ENCODE measurements at regions of chr7 and their contacts with region 1.

Region 1: DNA sequence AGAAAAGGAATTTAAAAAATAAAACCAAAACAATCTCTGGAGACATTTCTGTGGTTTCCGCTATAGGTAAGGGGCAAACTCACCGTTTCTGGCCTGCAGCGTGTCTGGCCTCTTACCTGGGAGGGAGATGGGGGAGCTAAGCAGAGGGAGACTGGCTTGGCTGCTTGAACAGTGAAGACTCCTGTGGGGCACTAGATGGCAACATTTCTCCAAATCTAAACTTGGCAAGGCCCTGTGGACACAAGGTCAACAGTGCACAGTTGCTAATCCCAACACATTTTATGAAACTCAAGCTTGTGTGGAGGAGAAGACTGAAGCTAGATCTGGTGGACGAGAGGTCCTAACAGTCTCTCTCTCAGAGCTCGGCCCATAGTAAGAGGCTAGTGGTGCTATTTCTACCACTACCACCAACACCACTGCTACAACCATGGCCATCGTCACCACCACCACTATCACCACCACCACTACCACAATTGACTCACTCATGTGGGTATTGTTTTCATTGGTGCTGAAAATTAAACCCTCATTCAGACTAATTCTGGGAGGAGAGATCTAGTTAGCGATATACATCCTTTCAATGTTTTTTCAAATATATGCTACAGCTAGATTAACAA is 28.4 kb upstream of the CDHR3 start:
- DNase-seq: peak in 1 of 3 donors; percentile 66
- ATAC-seq: peak; percentile 94 to 98 (median 96)
- H3K4me3 ChIP-seq: no peak overlapping the region
- H3K27ac ChIP-seq: peak overlapping the region in 2 of 3 donors; percentile 0 to 64
- H3K4me1 ChIP-seq: peaks cover 0 to 12% (median 0%) of the 10 kb centered on the region in 4 donors
- H3K27me3 ChIP-seq: no peaks in the 10 kb centered on the region
- CTCF ChIP-seq: peak; percentile 50 to 66 (median 60)
- POLR2A ChIP-seq: no peak

Region 2: GRCh38 chr7:105990726-105991453 is 56.2 kb after region 1 on chr7:
- intact Hi-C with region 1: no loop called
- DNase-seq: no peak
- ATAC-seq: no peak
- H3K4me3 ChIP-seq: no peak overlapping the region
- H3K27ac ChIP-seq: no peak overlapping the region
- H3K4me1 ChIP-seq: no peaks in the 10 kb centered on the region
- H3K27me3 ChIP-seq: no peaks in the 10 kb centered on the region
- CTCF ChIP-seq: no peak
- POLR2A ChIP-seq: no peak

Region 3: GRCh38 chr7:106009403-106010226 is 74.9 kb after region 1 on chr7:
- intact Hi-C with region 1: loop called in 1 of 2 experiments (anchors 5 kb)
- DNase-seq: peak; percentile 69 to 79 (median 75)
- ATAC-seq: peak; percentile 99
- H3K4me3 ChIP-seq: no peak overlapping the region
- H3K27ac ChIP-seq: no peak overlapping the region
- H3K4me1 ChIP-seq: peaks cover 0 to 7% (median 0%) of the 10 kb centered on the region in 4 donors
- H3K27me3 ChIP-seq: no peaks in the 10 kb centered on the region
- CTCF ChIP-seq: peak; percentile 93 to 100 (median 97)
- POLR2A ChIP-seq: no peak

Measured in right lobe of liver (tissue), 6 donors.